ENCODE measurements at regions of chr10 and their contacts with region 1.

Region 1: GRCh38 chr10:79195091-79195923 is 126.5 kb downstream of the ZMIZ1 start:
- DNase-seq: peak; percentile 85
- H3K4me3 ChIP-seq: peak overlapping the region in 1 of 2 experiments; percentile 24; a peak in 1 of 4 replicates
- H3K27ac ChIP-seq: peak overlapping the region; percentile 70 to 93
- H3K4me1 ChIP-seq: peaks cover 25 to 72% of the 10 kb centered on the region in 2 experiments
- H3K27me3 ChIP-seq: no peaks in the 10 kb centered on the region
- CTCF ChIP-seq: peak; percentile 93
- EP300 ChIP-seq: no peak
- RAD21 ChIP-seq: peak; percentile 95

Region 2: GRCh38 chr10:78302989-78303854 is 892.1 kb before region 1 on chr10:
- CTCF ChIA-PET with region 1: interaction called, 16 read pairs
- POLR2A ChIA-PET with region 1: no interaction called
- DNase-seq: peak; percentile 99
- H3K4me3 ChIP-seq: peak overlapping the region; percentile 51 to 72
- H3K27ac ChIP-seq: peak overlapping the region; percentile 71 to 99
- H3K4me1 ChIP-seq: peaks cover 15 to 41% of the 10 kb centered on the region in 2 experiments; a peak in 3 of 4 replicates
- H3K27me3 ChIP-seq: no peaks in the 10 kb centered on the region
- CTCF ChIP-seq: peak; percentile 66
- EP300 ChIP-seq: peak; percentile 70 to 79; a peak in 3 of 4 replicates
- RAD21 ChIP-seq: peak; percentile 73

Region 3: GRCh38 chr10:78972947-78973900 is 222.1 kb before region 1 on chr10:
- CTCF ChIA-PET with region 1: interaction called, 10 read pairs
- POLR2A ChIA-PET with region 1: interaction called, 7 read pairs
- DNase-seq: peak; percentile 92
- H3K4me3 ChIP-seq: peak overlapping the region; percentile 43 to 62
- H3K27ac ChIP-seq: peak overlapping the region; percentile 99
- H3K4me1 ChIP-seq: peaks cover 29 to 66% of the 10 kb centered on the region in 2 experiments
- H3K27me3 ChIP-seq: no peaks in the 10 kb centered on the region
- CTCF ChIP-seq: no peak
- EP300 ChIP-seq: peak; percentile 28 to 56; a peak in 3 of 4 replicates
- RAD21 ChIP-seq: peak; percentile 12; the same call in 1 of the 2 replicates

Region 4: DNA sequence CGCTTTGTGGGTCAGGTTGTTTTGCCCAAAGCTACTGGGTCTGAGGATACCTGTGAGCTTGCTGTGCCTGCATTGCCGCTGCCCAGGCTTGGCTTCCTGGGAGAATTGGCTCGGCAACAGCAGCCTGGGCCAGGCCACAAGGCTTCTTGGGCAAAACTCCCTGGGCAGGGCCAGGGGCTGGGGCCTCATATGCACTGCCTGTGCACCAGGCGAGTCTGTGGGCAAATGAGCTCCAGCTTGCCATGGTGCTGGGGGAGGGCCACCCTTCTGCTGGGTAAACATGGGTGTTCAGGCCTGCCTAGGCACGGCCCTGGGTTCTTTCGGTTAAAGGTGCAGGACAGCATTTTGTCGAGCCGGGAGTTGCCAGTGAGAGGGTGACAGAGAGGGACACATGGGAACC is 107.1 kb before region 1 on chr10:
- CTCF ChIA-PET with region 1: interaction called, 11 read pairs
- POLR2A ChIA-PET with region 1: no interaction called
- DNase-seq: no peak
- H3K4me3 ChIP-seq: no peak overlapping the region
- H3K27ac ChIP-seq: peak overlapping the region in 1 of 2 experiments; percentile 3; a peak in 1 of 4 replicates
- H3K4me1 ChIP-seq: peaks cover 20 to 84% of the 10 kb centered on the region in 2 experiments; a peak in 3 of 4 replicates
- H3K27me3 ChIP-seq: no peaks in the 10 kb centered on the region
- CTCF ChIP-seq: no peak
- EP300 ChIP-seq: no peak
- RAD21 ChIP-seq: no peak

Region 5: DNA sequence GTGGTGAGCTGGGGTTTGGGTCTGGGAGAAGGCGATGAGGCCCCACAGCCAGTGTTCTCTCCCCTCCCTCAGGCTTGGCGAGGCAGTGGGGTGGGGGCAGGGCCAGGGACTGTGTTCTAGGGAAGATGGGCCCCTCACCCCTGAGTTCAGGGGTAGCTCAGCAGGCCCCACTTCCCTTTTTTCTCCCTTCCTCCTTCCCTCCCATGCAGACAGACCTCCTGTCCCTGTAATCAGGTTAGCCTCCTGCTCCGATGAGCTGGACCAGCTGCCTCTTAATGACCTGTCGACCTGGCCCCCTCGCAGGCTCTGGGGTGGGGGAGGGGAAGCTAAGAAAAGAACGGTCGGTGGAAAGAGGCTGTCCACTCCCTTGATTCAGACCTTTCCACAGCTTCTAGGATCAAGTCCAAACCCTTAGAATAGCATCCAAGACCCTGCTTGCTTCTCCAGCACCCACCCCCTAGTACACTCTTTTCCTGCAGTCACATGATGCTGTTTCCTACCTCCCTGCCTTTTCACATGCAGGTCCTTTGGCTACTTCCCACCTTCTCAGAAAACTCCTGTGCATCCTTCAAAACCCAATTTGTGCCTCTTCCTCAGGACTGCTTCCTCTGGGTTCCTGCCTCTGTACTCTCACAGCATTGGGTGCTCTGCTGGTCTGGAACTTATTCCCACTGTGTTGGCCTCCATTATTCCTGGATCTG is 62.5 kb before region 1 on chr10:
- CTCF ChIA-PET with region 1: interaction called, 30 read pairs
- POLR2A ChIA-PET with region 1: interaction called, 3 read pairs
- DNase-seq: peak; percentile 82
- H3K4me3 ChIP-seq: no peak overlapping the region
- H3K27ac ChIP-seq: peak overlapping the region; percentile 3 to 95; a peak in 3 of 4 replicates
- H3K4me1 ChIP-seq: peaks cover 41 to 95% of the 10 kb centered on the region in 2 experiments
- H3K27me3 ChIP-seq: no peaks in the 10 kb centered on the region
- CTCF ChIP-seq: no peak
- EP300 ChIP-seq: peak in 1 of 2 experiments; percentile 65; a peak in 2 of 4 replicates
- RAD21 ChIP-seq: no peak; the same call in 1 of the 2 replicates

Region 6: GRCh38 chr10:79162861-79163665 is 32.2 kb before region 1 on chr10:
- CTCF ChIA-PET with region 1: interaction called, 91 read pairs
- POLR2A ChIA-PET with region 1: interaction called, 3 read pairs
- DNase-seq: no peak
- H3K4me3 ChIP-seq: no peak overlapping the region
- H3K27ac ChIP-seq: peak overlapping the region; percentile 9 to 59; a peak in 3 of 4 replicates
- H3K4me1 ChIP-seq: peaks cover 28 to 89% of the 10 kb centered on the region in 2 experiments
- H3K27me3 ChIP-seq: no peaks in the 10 kb centered on the region
- CTCF ChIP-seq: no peak
- EP300 ChIP-seq: peak in 1 of 2 experiments; percentile 61; a peak in 1 of 4 replicates
- RAD21 ChIP-seq: no peak

Region 7: GRCh38 chr10:79274279-79275104 is 79.2 kb after region 1 on chr10:
- CTCF ChIA-PET with region 1: interaction called, 11 read pairs
- POLR2A ChIA-PET with region 1: interaction called, 3 read pairs
- DNase-seq: peak; percentile 87
- H3K4me3 ChIP-seq: no peak overlapping the region; a peak in 1 of 4 replicates
- H3K27ac ChIP-seq: peak overlapping the region; percentile 27 to 99; a peak in 3 of 4 replicates
- H3K4me1 ChIP-seq: peaks cover 8 to 86% of the 10 kb centered on the region in 2 experiments
- H3K27me3 ChIP-seq: no peaks in the 10 kb centered on the region
- CTCF ChIP-seq: no peak
- EP300 ChIP-seq: peak in 1 of 2 experiments; percentile 83; a peak in 2 of 4 replicates
- RAD21 ChIP-seq: peak; percentile 34

Measured in SK-N-SH (cell line).